ENCODE measurements at regions of chr5 and their contacts with region 1.

Region 1: DNA sequence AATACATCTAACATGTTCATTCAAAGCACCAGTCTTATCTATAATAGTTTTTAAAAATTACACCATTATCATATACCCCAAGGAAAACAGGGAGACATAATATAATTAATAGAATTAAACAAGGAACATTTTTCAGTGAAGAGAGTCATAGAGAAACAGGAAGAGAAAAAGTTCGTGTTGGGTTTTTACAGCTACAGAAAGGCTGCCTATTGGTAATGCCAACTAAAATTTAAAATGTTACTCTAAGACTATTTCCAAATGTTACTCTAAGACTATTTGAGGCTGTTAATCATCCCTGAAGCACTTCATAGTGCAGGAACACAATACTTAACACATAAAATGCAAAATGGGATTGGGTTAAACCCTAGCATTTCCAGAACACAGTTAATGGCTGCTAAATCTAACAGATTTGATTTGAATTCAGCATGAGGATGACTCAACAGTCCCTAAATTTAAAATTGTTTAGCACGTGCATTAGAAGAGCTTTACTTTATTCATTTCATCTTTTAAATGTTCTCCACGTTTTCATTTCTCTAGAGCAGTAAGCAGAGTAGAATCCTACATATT is 54.5 kb downstream of the OXCT1 start:
- DNase-seq: no peak
- H3K4me3 ChIP-seq: no peak overlapping the region
- H3K27ac ChIP-seq: no peak overlapping the region
- H3K4me1 ChIP-seq: peaks cover 1% of the 10 kb centered on the region
- H3K27me3 ChIP-seq: no peaks in the 10 kb centered on the region
- CTCF ChIP-seq: no peak
- EP300 ChIP-seq: no peak
- POLR2A ChIP-seq: no peak

Region 2: DNA sequence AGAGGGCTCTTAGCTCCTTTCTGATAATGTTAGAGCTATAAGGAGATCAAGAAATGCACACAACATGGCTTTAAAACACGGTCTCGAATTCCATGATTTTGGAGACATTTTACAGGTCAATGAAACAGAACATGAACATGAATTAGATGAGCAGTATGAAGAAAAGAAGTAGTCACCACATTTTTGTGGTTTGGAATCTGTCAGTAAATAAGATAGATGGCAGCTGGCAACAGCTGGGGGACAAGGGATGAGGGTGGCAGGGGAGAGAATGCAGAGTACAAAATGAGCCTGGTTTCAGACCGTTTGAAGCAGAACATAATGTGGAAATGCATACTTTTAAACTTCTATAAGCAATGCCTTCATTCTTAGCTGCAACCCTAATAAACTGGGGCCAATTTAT is 52.7 kb before region 1 on chr5:
- intact Hi-C with region 1: loop called in 1 of 4 experiments (anchors 10 kb)
- DNase-seq: no peak
- H3K4me3 ChIP-seq: no peak overlapping the region
- H3K27ac ChIP-seq: no peak overlapping the region
- H3K4me1 ChIP-seq: peaks cover 2% of the 10 kb centered on the region
- H3K27me3 ChIP-seq: no peaks in the 10 kb centered on the region
- CTCF ChIP-seq: no peak
- EP300 ChIP-seq: no peak
- POLR2A ChIP-seq: no peak

Region 3: DNA sequence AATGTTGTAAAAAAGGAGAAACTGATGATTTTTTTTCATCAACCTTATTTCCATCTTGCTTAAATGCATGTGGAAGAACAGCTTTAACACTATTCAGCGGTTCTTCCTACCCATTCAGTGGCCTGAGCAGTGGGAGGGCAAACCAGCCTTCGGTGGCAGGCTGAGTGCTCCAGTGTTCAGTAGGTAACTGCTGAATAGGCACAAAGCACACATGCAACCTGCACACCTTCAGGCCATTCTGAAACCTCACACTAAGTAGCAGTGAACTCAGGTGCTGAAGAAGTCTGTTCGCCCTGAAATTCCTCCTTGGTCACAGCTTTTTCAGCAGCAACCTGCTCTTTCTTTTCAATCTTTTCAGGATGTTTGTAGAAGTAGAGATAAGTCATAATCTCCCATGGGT is 135.5 kb after region 1 on chr5:
- intact Hi-C with region 1: no loop called
- DNase-seq: no peak
- H3K4me3 ChIP-seq: no peak overlapping the region
- H3K27ac ChIP-seq: no peak overlapping the region
- H3K4me1 ChIP-seq: no peaks in the 10 kb centered on the region
- H3K27me3 ChIP-seq: no peaks in the 10 kb centered on the region
- CTCF ChIP-seq: no peak
- EP300 ChIP-seq: no peak
- POLR2A ChIP-seq: no peak

Measured in ovary (tissue), 10 donors.